Activated T-helper 2 cell treated with anti-CD3 and anti-CD28 coated beads, Interferon-gamma antibody, Interleukin-2, Interleukin-4, amounts not matched to agents 10 μg/mL and 5 μg/mL and 100 μg/mL, durations not matched to agents 14 hours and 24 hours and 36 hours (primary cell): ENCODE measurements at regions of chr2 and their contacts with region 1.

Region 1: GRCh38 chr2:119826370-119826961 is 66.7 kb downstream of the PTPN4 start:
- DNase-seq: no peak
- H3K4me3 Mint-ChIP-seq: no peak overlapping the region
- H3K27ac Mint-ChIP-seq: no peak overlapping the region
- H3K4me1 Mint-ChIP-seq: peaks cover 22% of the 10 kb centered on the region
- H3K27me3 Mint-ChIP-seq: no peaks in the 10 kb centered on the region

Region 2: DNA sequence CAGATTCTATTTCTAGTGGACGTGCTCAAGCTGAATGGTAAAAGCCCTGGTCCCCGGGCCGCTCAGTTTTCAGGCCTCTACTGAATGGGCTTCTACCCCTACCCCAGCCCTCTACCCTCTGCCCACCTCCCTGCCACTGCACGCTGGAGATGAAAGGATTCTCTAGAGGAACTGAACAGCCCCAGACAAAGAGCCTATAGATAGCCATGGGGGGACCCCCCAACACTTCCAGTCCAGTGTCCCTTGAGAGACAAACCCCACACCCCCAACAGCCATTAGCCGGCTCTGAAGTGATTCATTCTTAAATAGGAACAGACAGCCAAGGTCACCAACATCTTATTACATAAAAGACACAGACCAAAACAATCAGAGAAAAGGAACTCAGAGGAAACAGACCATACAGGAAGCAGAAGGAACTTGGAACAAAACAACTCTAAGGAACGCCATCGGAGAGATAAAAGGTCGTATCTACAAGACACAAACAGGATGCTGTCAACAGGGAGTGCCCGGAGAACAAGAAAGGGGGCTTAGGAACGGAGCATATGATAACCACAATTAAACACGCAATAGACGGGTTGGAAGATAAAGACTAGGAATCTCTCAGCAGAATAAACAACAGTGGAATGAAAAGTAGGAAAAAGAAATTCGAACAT is 371.3 kb before region 1 on chr2:
- intact Hi-C with region 1: no loop called
- DNase-seq: no peak
- H3K4me3 Mint-ChIP-seq: no peak overlapping the region
- H3K27ac Mint-ChIP-seq: no peak overlapping the region
- H3K4me1 Mint-ChIP-seq: no peaks in the 10 kb centered on the region
- H3K27me3 Mint-ChIP-seq: peaks cover 14% of the 10 kb centered on the region

Region 3: DNA sequence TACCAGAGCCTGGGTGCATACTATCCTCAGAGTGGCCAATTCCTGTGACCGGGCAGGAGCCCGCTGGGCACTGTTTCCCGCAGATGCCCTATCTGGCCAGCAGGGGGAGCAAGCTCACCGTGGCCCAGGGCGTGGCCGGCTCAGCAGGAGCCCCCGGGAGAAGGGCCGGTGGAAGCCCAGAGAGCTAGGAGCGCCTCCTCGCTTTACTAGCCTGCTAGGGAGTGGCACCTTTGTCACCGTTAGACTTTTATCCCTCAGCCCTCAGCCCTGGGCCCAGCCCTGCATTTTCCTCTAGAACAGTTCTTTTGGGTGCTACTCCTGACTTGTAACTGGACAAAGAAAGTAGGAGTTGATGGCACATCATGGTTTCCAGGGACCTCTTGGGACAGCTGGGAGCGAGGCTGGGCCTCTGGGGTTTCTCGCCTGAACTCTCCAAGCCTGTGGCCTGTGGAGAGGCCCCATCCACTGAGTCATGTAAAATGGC is 123.5 kb before region 1 on chr2:
- intact Hi-C with region 1: loop called (anchors 1 kb)
- DNase-seq: peak; percentile 52
- H3K4me3 Mint-ChIP-seq: no peak overlapping the region
- H3K27ac Mint-ChIP-seq: no peak overlapping the region
- H3K4me1 Mint-ChIP-seq: peaks cover 4% of the 10 kb centered on the region
- H3K27me3 Mint-ChIP-seq: peaks cover 4% of the 10 kb centered on the region

Region 4: GRCh38 chr2:119753041-119753929 is 73.2 kb before region 1 on chr2:
- intact Hi-C with region 1: loop called (anchors 1 kb)
- DNase-seq: no peak
- H3K4me3 Mint-ChIP-seq: no peak overlapping the region
- H3K27ac Mint-ChIP-seq: no peak overlapping the region
- H3K4me1 Mint-ChIP-seq: peaks cover 13% of the 10 kb centered on the region
- H3K27me3 Mint-ChIP-seq: peaks cover 10% of the 10 kb centered on the region

Region 5: GRCh38 chr2:119862127-119862889 is 35.8 kb after region 1 on chr2:
- intact Hi-C with region 1: loop called (anchors 5 kb)
- DNase-seq: no peak
- H3K4me3 Mint-ChIP-seq: peak overlapping the region; percentile 37
- H3K27ac Mint-ChIP-seq: peak overlapping the region; percentile 63
- H3K4me1 Mint-ChIP-seq: peaks cover 60% of the 10 kb centered on the region
- H3K27me3 Mint-ChIP-seq: no peaks in the 10 kb centered on the region